Activated CD4-positive, alpha-beta memory T cell treated with anti-CD3 and anti-CD28 coated beads for 36 hours (primary cell): ENCODE measurements at regions of chrX and their contacts with region 1.

Region 1: GRCh38 chrX:49922291-49923241 is at the start of gene CLCN5:
- DNase-seq: peak; percentile 95
- H3K4me3 Mint-ChIP-seq: peak within 1 kb of the TSS; percentile 71
- H3K27ac Mint-ChIP-seq: peak within 1 kb of the TSS; percentile 49
- H3K4me1 Mint-ChIP-seq: peaks cover 12% of the 10 kb centered on the region
- H3K27me3 Mint-ChIP-seq: no peaks in the 10 kb centered on the region
- total RNA-seq, gene CLCN5: 2.5 to 2.9 TPM

Region 2: DNA sequence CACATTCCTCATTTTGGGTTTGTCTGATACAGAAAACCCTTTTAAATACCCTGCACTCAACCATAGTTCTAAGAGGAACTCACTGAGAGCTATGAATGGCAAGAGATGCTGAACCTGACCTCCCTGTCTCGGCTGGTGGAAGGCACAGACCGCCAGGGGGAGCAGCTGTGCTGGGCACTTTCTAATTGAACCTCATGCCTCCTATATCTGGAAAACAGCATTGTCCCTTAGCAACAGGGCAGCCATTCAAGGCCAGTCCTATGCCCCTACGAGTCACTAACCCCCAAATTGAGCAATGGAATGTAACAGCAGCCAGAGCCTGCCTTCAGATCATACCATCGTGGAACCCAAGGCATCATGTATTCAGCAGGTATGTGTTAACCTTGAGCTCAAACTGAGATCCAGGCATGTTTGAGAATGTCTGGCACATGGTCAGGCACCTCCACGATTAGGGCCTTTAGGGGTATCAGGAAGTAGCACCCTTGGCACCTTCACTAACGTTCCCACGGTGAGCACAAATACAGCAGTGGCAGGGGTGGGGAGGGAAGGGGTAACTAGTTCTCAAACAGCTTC is 38.2 kb before region 1 on chrX:
- CTCF ChIA-PET with region 1: interaction called, 41 read pairs
- POLR2A ChIA-PET with region 1: no interaction called
- intact Hi-C with region 1: loop called (anchors 1 kb)
- DNase-seq: peak; percentile 67
- H3K4me3 Mint-ChIP-seq: no peak overlapping the region
- H3K27ac Mint-ChIP-seq: no peak overlapping the region
- H3K4me1 Mint-ChIP-seq: peaks cover 23% of the 10 kb centered on the region
- H3K27me3 Mint-ChIP-seq: no peaks in the 10 kb centered on the region

Region 3: DNA sequence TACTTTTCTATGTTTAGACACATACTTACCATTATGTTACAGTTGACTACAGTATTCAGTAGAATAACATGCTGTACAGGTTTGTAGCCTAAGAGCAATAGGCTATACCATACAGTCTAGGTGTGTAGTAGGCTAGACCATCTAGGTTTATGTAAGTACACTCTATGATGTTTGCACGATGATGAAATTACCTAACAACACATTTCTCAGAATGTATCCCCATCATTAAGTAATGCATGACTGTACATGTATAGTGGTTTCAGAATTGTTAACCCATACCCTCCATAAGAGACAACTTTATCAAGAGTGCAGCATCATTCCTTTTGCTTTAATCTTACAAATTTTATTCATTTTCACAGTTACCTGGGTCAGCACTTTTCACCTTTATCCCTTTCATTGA is 126.7 kb after region 1 on chrX:
- CTCF ChIA-PET with region 1: no interaction called
- POLR2A ChIA-PET with region 1: no interaction called
- intact Hi-C with region 1: no loop called
- DNase-seq: no peak
- H3K4me3 Mint-ChIP-seq: no peak overlapping the region
- H3K27ac Mint-ChIP-seq: no peak overlapping the region
- H3K4me1 Mint-ChIP-seq: no peaks in the 10 kb centered on the region
- H3K27me3 Mint-ChIP-seq: no peaks in the 10 kb centered on the region

Region 4: GRCh38 chrX:50204364-50204899 is 281.9 kb after region 1 on chrX and contains the start of gene CCNB3:
- CTCF ChIA-PET with region 1: interaction called, 3 read pairs
- POLR2A ChIA-PET with region 1: no interaction called
- intact Hi-C with region 1: loop called (anchors 2 kb)
- DNase-seq: peak; percentile 77
- H3K4me3 Mint-ChIP-seq: peak within 1 kb of the TSS; percentile 66
- H3K27ac Mint-ChIP-seq: peak within 1 kb of the TSS; percentile 88
- H3K4me1 Mint-ChIP-seq: peaks cover 8% of the 10 kb centered on the region
- H3K27me3 Mint-ChIP-seq: no peaks in the 10 kb centered on the region
- total RNA-seq, gene CCNB3: 0.14 to 0.90 TPM